Activated CD4-positive, alpha-beta T cell treated with anti-CD3 and anti-CD28 coated beads for 36 hours (primary cell): ENCODE measurements at regions of chr17 and their contacts with region 1.

Region 1: GRCh38 chr17:63768433-63768832 is 5.0 kb downstream of the CCDC47 start:
- DNase-seq: no peak
- ATAC-seq: no peak
- H3K4me3 Mint-ChIP-seq: no peak overlapping the region
- H3K27ac Mint-ChIP-seq: peak overlapping the region; percentile 31
- H3K4me1 Mint-ChIP-seq: peaks cover 49% of the 10 kb centered on the region
- H3K27me3 Mint-ChIP-seq: no peaks in the 10 kb centered on the region

Region 2: GRCh38 chr17:63751806-63752205 is 16.6 kb before region 1 on chr17:
- CTCF ChIA-PET with region 1: interaction called, 4 read pairs
- POLR2A ChIA-PET with region 1: interaction called, 5 read pairs
- intact Hi-C with region 1: loop called in 1 of 2 experiments (anchors 2 kb)
- DNase-seq: peak; percentile 48
- ATAC-seq: peak; percentile 76
- H3K4me3 Mint-ChIP-seq: peak overlapping the region; percentile 50
- H3K27ac Mint-ChIP-seq: peak overlapping the region; percentile 81
- H3K4me1 Mint-ChIP-seq: peaks cover 21% of the 10 kb centered on the region
- H3K27me3 Mint-ChIP-seq: no peaks in the 10 kb centered on the region